ENCODE measurements at regions of chr12 and their contacts with region 1.

Region 1: DNA sequence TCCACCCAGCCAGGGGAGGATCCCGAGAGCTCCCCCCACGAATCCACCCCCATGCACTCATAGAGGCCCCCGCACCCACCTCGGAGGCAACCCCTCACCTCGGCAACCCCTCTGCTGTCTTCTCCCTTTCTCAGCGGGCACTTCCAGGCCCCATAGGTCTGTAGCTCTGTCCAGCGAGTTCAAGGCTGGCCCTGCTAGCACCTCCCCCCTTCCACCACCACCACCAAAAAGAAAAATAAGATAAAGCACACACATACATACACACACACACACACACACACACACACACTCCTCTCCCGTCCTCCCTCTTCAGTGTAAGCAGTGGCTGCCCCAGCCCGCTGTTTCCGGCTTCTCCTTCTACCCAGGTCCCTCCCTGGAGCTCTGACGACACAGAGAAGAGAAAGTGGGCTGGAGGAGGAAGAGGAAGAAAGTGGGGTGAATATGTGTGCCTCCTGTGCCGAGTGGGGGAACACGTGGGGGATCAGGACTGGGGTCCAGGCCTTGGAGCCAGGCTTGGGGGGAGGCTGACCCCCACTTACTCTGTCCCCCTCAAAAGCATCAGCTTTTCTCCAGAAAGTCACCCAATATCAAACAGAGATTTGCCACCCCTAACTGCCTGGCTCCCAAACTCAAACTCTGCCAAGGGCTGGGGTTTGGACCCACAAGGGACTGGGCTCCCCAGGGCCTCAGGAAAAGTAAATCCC is at the start of gene STAT6:
- DNase-seq: peak; percentile 69 to 96 (median 80)
- ATAC-seq: peak; percentile 64
- H3K4me3 ChIP-seq: peak within 1 kb of the TSS; percentile 95
- H3K4me3 Mint-ChIP-seq: peak within 1 kb of the TSS; percentile 96
- H3K27ac ChIP-seq: peak within 1 kb of the TSS; percentile 100
- H3K27ac Mint-ChIP-seq: peak within 1 kb of the TSS; percentile 94
- H3K4me1 ChIP-seq: peaks cover 57% of the 10 kb centered on the region
- H3K4me1 Mint-ChIP-seq: peaks cover 53% of the 10 kb centered on the region
- H3K27me3 ChIP-seq: no peaks in the 10 kb centered on the region
- H3K27me3 Mint-ChIP-seq: peaks cover 4% of the 10 kb centered on the region
- CTCF ChIP-seq: no peak
- total RNA-seq, gene STAT6: 133 to 144 TPM

Region 2: GRCh38 chr12:56688129-56688845 is 422.9 kb before region 1 on chr12 and contains the start of gene PTGES3:
- CTCF ChIA-PET with region 1: no interaction called
- POLR2A ChIA-PET with region 1: interaction called, 23 read pairs
- intact Hi-C with region 1: no loop called
- DNase-seq: peak; percentile 93 to 100 (median 97)
- ATAC-seq: peak; percentile 73
- H3K4me3 ChIP-seq: peak within 1 kb of the TSS; percentile 96
- H3K4me3 Mint-ChIP-seq: peak within 1 kb of the TSS; percentile 100
- H3K27ac ChIP-seq: peak within 1 kb of the TSS; percentile 98 to 99
- H3K27ac Mint-ChIP-seq: peak within 1 kb of the TSS; percentile 96
- H3K4me1 ChIP-seq: peaks cover 39% of the 10 kb centered on the region
- H3K4me1 Mint-ChIP-seq: peaks cover 43% of the 10 kb centered on the region
- H3K27me3 ChIP-seq: no peaks in the 10 kb centered on the region
- H3K27me3 Mint-ChIP-seq: no peaks in the 10 kb centered on the region
- CTCF ChIP-seq: no peak
- total RNA-seq, gene PTGES3: 146 to 154 TPM

Region 3: GRCh38 chr12:56785141-56785865 is 325.9 kb before region 1 on chr12:
- CTCF ChIA-PET with region 1: no interaction called
- POLR2A ChIA-PET with region 1: no interaction called
- intact Hi-C with region 1: no loop called
- DNase-seq: no peak
- ATAC-seq: no peak
- H3K4me3 ChIP-seq: no peak overlapping the region
- H3K4me3 Mint-ChIP-seq: no peak overlapping the region
- H3K27ac ChIP-seq: no peak overlapping the region
- H3K27ac Mint-ChIP-seq: no peak overlapping the region
- H3K4me1 ChIP-seq: no peaks in the 10 kb centered on the region
- H3K4me1 Mint-ChIP-seq: no peaks in the 10 kb centered on the region
- H3K27me3 ChIP-seq: no peaks in the 10 kb centered on the region
- H3K27me3 Mint-ChIP-seq: no peaks in the 10 kb centered on the region
- CTCF ChIP-seq: no peak

Region 4: GRCh38 chr12:57005980-57006808 is 105.0 kb before region 1 on chr12 and contains the start of gene ZBTB39:
- CTCF ChIA-PET with region 1: interaction called, 8 read pairs
- POLR2A ChIA-PET with region 1: interaction called, 19 read pairs
- intact Hi-C with region 1: loop called (anchors 1 kb)
- DNase-seq: peak; percentile 32 to 90 (median 60)
- ATAC-seq: peak; percentile 74
- H3K4me3 ChIP-seq: peak within 1 kb of the TSS; percentile 76
- H3K4me3 Mint-ChIP-seq: peak within 1 kb of the TSS; percentile 93
- H3K27ac ChIP-seq: peak within 1 kb of the TSS; percentile 33 to 47
- H3K27ac Mint-ChIP-seq: peak within 1 kb of the TSS; percentile 81
- H3K4me1 ChIP-seq: peaks cover 51% of the 10 kb centered on the region
- H3K4me1 Mint-ChIP-seq: peaks cover 66% of the 10 kb centered on the region
- H3K27me3 ChIP-seq: no peaks in the 10 kb centered on the region
- H3K27me3 Mint-ChIP-seq: no peaks in the 10 kb centered on the region
- CTCF ChIP-seq: peak; percentile 49
- total RNA-seq, gene ZBTB39: 6.9 to 8.0 TPM

Region 5: GRCh38 chr12:57063991-57064685 is 47.0 kb before region 1 on chr12:
- CTCF ChIA-PET with region 1: interaction called, 141 read pairs
- POLR2A ChIA-PET with region 1: interaction called, 244 read pairs
- intact Hi-C with region 1: loop called (anchors 1 kb)
- DNase-seq: peak in 8 of 14 experiments; percentile 6 to 92 (median 57)
- ATAC-seq: peak; percentile 95
- H3K4me3 ChIP-seq: peak overlapping the region; percentile 39
- H3K4me3 Mint-ChIP-seq: peak overlapping the region; percentile 70
- H3K27ac ChIP-seq: peak overlapping the region; percentile 70 to 82
- H3K27ac Mint-ChIP-seq: peak overlapping the region; percentile 87
- H3K4me1 ChIP-seq: peaks cover 12% of the 10 kb centered on the region
- H3K4me1 Mint-ChIP-seq: peaks cover 34% of the 10 kb centered on the region
- H3K27me3 ChIP-seq: no peaks in the 10 kb centered on the region
- H3K27me3 Mint-ChIP-seq: no peaks in the 10 kb centered on the region
- CTCF ChIP-seq: no peak

Region 6: DNA sequence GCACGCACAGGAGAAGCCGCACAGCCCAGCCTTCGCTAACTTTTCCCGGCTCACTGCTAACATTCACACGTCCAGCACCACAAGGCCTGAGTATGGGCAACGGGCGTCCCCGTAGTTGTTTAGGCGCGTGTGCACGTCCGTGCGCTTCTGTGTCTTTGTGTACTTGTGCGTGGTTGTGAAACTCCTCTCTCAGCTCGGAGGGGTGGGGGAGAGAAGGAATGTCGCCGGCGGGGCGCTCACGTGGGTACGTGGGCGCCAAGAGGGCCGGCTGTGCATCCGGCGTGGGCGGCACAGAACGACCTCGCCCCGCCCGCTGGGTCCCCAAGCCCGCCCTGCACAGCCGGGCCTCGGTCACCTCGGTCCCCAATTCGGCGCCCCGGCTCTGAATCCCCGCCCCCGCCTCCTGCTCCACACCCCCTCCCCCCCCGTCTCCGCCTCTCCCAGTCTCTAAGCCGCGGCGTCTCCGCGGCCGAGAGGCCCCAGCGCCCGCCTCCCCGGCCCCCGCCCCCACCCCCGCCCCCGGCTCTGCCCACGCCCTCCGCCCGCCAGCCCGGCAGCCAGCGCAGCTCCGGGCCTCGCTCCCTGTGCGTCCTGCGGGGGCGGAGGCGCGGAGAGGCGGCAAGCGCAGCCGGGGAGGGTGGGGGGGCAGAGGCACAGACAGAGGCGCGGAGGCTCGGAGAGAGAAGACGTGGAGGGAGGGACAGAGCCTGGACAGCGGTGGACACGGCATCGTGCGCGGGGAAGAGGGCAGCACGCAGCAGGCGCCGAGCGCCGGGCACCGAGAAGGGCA is 22.5 kb before region 1 on chr12 and contains the start of gene NAB2:
- CTCF ChIA-PET with region 1: interaction called, 47 read pairs
- POLR2A ChIA-PET with region 1: interaction called, 344 read pairs
- intact Hi-C with region 1: loop called (anchors 1 kb)
- DNase-seq: peak; percentile 85 to 99 (median 95)
- ATAC-seq: peak; percentile 57
- H3K4me3 ChIP-seq: peak within 1 kb of the TSS; percentile 82
- H3K4me3 Mint-ChIP-seq: peak within 1 kb of the TSS; percentile 98
- H3K27ac ChIP-seq: peak within 1 kb of the TSS; percentile 99
- H3K27ac Mint-ChIP-seq: peak within 1 kb of the TSS; percentile 98
- H3K4me1 ChIP-seq: peaks cover 71% of the 10 kb centered on the region
- H3K4me1 Mint-ChIP-seq: peaks cover 70% of the 10 kb centered on the region
- H3K27me3 ChIP-seq: no peaks in the 10 kb centered on the region
- H3K27me3 Mint-ChIP-seq: no peaks in the 10 kb centered on the region
- CTCF ChIP-seq: no peak
- total RNA-seq, gene NAB2: 4.8 to 6.1 TPM

Region 7: DNA sequence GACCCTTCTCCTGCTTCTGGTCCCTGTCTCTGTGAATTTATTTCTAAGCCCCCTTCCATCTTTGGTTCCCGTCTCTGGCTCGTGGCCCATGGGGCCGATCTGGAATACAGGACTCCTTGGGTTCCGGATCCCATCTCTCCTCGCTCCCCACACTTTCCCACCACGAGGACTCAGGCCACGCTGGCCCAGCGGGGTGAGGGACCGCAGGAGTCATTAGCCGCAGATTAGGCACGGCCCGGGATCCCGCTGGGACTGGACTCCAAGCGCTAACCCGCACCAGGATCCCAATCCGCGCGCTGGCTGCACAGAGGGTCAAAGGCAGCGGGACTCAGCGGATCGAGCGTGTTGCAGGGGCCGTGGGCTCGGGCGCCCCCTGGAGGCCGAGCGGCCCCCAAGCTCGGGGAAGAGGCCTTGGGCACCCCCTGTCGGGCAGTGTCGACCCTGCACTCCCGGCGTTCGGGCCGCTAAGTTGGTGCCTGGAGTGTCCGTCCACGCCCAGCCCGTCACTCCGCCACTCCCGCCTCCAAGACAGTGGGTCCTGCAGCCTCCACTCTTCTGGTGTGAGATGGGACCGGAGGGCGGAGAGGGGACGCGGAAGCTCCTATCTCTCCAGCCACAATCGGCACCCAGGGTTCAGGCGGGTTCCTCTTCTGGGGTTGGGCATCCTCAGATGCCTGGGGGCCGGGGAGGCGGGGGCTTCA is 127.8 kb after region 1 on chr12:
- CTCF ChIA-PET with region 1: interaction called, 13 read pairs
- POLR2A ChIA-PET with region 1: interaction called, 3 read pairs
- intact Hi-C with region 1: no loop called
- DNase-seq: peak; percentile 74 to 95 (median 82)
- ATAC-seq: peak; percentile 59
- H3K4me3 ChIP-seq: peak overlapping the region; percentile 82
- H3K4me3 Mint-ChIP-seq: peak overlapping the region; percentile 96
- H3K27ac ChIP-seq: no peak overlapping the region
- H3K27ac Mint-ChIP-seq: peak overlapping the region; percentile 68
- H3K4me1 ChIP-seq: peaks cover 94% of the 10 kb centered on the region
- H3K4me1 Mint-ChIP-seq: peaks cover 90% of the 10 kb centered on the region
- H3K27me3 ChIP-seq: peaks cover 62 to 63% of the 10 kb centered on the region in 2 experiments
- H3K27me3 Mint-ChIP-seq: peaks cover 79% of the 10 kb centered on the region
- CTCF ChIP-seq: peak; percentile 100

Measured in CD4-positive, alpha-beta T cell (primary cell).